ENCODE measurements at regions of chr10 and their contacts with region 1.

Region 1: GRCh38 chr10:126110489-126111180 is 214.3 kb downstream of the FANK1 start:
- DNase-seq: peak; percentile 60
- ATAC-seq: peak; percentile 37; the same call in 1 of the 2 replicates
- H3K4me3 ChIP-seq: no peak overlapping the region
- H3K27ac ChIP-seq: no peak overlapping the region
- H3K4me1 ChIP-seq: no peaks in the 10 kb centered on the region
- H3K27me3 ChIP-seq: no peaks in the 10 kb centered on the region; the same call in 1 of the 2 replicates
- CTCF ChIP-seq: no peak
- POLR2A ChIP-seq: no peak
- RAD21 ChIP-seq: no peak

Region 2: DNA sequence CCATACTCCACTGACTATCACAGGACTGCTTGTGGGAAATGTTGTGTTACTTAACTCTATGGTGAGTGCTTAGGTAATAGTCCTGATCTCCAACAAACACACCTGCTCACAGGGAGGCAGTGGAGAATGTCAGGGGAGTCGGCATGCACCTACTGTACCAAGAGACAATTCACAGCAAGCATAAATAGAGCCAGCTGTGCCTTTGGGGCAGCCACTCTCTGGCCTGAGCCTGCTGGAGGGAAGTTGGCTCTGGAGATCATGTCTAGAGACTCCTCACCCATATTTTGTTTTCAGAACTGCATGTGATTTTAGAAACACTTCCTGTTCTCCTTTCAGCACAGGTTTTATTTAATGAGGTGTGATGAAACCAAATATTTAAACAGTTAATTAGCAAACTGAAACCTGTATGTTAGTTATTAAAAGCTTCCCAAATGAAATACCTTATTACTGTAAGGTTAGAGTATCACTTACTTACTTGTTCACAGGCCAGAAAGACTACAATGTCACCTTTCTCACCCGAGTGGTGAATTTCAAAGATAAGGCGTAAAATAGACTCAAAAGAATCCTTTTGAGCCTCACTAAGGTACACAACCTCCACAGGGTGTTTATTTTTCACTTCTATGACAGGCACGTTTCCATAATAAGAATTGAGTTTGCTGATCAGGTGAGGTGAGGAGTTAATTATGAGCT is 251.4 kb before region 1 on chr10:
- CTCF ChIA-PET with region 1: no interaction called
- POLR2A ChIA-PET with region 1: no interaction called
- dilution Hi-C with region 1: no loop called
- in situ Hi-C with region 1: no loop called
- intact Hi-C with region 1: no loop called
- DNase-seq: no peak
- ATAC-seq: no peak
- H3K4me3 ChIP-seq: no peak overlapping the region
- H3K27ac ChIP-seq: no peak overlapping the region
- H3K4me1 ChIP-seq: no peaks in the 10 kb centered on the region
- H3K27me3 ChIP-seq: no peaks in the 10 kb centered on the region
- CTCF ChIP-seq: no peak
- POLR2A ChIP-seq: no peak
- RAD21 ChIP-seq: no peak

Region 3: DNA sequence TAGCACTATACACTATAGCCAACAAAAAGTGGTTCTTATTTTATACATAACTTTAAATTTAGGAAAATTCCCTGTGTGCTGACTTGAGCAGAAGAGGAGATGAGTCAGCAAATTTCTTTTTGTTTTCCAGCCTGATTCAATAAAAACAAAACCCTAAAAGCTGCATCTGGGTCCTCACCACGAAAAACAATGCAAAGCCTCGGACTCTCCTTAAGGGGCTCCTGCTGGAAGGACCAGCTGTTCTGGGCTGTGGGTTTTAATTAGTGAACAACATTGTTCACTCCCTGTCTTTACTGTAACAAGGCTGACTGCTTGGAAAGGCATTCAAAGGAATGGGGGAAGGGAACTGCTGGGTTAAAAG is 37.6 kb after region 1 on chr10:
- CTCF ChIA-PET with region 1: no interaction called
- POLR2A ChIA-PET with region 1: no interaction called
- dilution Hi-C with region 1: no loop called
- in situ Hi-C with region 1: no loop called
- intact Hi-C with region 1: no loop called
- DNase-seq: peak; percentile 51
- ATAC-seq: peak; percentile 84
- H3K4me3 ChIP-seq: no peak overlapping the region
- H3K27ac ChIP-seq: peak overlapping the region; percentile 46; the same call in 1 of the 2 replicates
- H3K4me1 ChIP-seq: peaks cover 11% of the 10 kb centered on the region
- H3K27me3 ChIP-seq: no peaks in the 10 kb centered on the region; the same call in 1 of the 2 replicates
- CTCF ChIP-seq: no peak
- POLR2A ChIP-seq: no peak
- RAD21 ChIP-seq: no peak

Region 4: GRCh38 chr10:126225086-126226008 is 114.7 kb after region 1 on chr10:
- CTCF ChIA-PET with region 1: no interaction called
- POLR2A ChIA-PET with region 1: interaction called, 10 read pairs
- dilution Hi-C with region 1: no loop called
- in situ Hi-C with region 1: no loop called
- intact Hi-C with region 1: no loop called
- DNase-seq: no peak
- ATAC-seq: no peak
- H3K4me3 ChIP-seq: no peak overlapping the region
- H3K27ac ChIP-seq: no peak overlapping the region
- H3K4me1 ChIP-seq: peaks cover 8% of the 10 kb centered on the region; the same call in 1 of the 2 replicates
- H3K27me3 ChIP-seq: no peaks in the 10 kb centered on the region
- CTCF ChIP-seq: no peak
- POLR2A ChIP-seq: no peak
- RAD21 ChIP-seq: no peak

Region 5: GRCh38 chr10:126252884-126253618 is 142.4 kb after region 1 on chr10:
- CTCF ChIA-PET with region 1: no interaction called
- POLR2A ChIA-PET with region 1: no interaction called
- dilution Hi-C with region 1: no loop called
- in situ Hi-C with region 1: no loop called
- intact Hi-C with region 1: no loop called
- DNase-seq: peak; percentile 100
- ATAC-seq: peak; percentile 87
- H3K4me3 ChIP-seq: no peak overlapping the region
- H3K27ac ChIP-seq: peak overlapping the region; percentile 68
- H3K4me1 ChIP-seq: peaks cover 19% of the 10 kb centered on the region
- H3K27me3 ChIP-seq: no peaks in the 10 kb centered on the region
- CTCF ChIP-seq: no peak
- POLR2A ChIP-seq: no peak; the same call in 1 of the 2 replicates
- RAD21 ChIP-seq: peak; percentile 23; the same call in 1 of the 2 replicates

Region 6: DNA sequence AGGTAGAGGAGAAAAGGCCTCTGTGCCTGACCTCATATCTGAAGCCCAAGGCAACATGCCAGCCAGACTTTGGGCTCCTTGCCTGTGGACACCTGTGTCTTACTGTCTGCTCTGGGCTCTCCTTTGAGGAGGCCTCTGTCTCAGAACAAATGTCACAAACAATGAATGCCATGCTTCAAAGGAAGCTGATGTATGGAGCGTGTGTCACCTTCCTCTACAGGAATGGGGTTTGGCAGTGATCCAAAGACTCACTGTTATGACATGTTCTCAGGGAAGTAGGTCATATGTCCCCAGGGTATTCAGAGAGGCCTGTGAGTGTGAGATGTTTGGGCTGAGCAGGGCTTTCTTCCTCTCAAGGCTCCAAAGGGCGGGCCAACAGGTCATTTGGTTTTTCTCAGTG is 1834.7 kb after region 1 on chr10:
- CTCF ChIA-PET with region 1: no interaction called
- POLR2A ChIA-PET with region 1: no interaction called
- dilution Hi-C with region 1: no loop called
- in situ Hi-C with region 1: no loop called
- intact Hi-C with region 1: no loop called
- DNase-seq: peak; percentile 17
- ATAC-seq: no peak
- H3K4me3 ChIP-seq: no peak overlapping the region
- H3K27ac ChIP-seq: no peak overlapping the region
- H3K4me1 ChIP-seq: no peaks in the 10 kb centered on the region
- H3K27me3 ChIP-seq: no peaks in the 10 kb centered on the region
- CTCF ChIP-seq: no peak
- POLR2A ChIP-seq: no peak
- RAD21 ChIP-seq: no peak